H1 (cell line): ENCODE measurements at regions of chr17 and their contacts with region 1.

Region 1: GRCh38 chr17:15444805-15445204 is 22.6 kb downstream of the CDRT4 start:
- DNase-seq: no peak
- H3K4me3 ChIP-seq: no peak overlapping the region
- H3K27ac ChIP-seq: no peak overlapping the region
- H3K4me1 ChIP-seq: no peaks in the 10 kb centered on the region
- H3K27me3 ChIP-seq: no peaks in the 10 kb centered on the region
- CTCF ChIP-seq: no peak
- EP300 ChIP-seq: no peak
- POLR2A ChIP-seq: no peak
- RAD21 ChIP-seq: no peak

Region 2: GRCh38 chr17:15171167-15172047 is 273.4 kb before region 1 on chr17:
- CTCF ChIA-PET with region 1: no interaction called
- POLR2A ChIA-PET with region 1: no interaction called
- DNase-seq: peak; percentile 44 to 83
- H3K4me3 ChIP-seq: no peak overlapping the region
- H3K27ac ChIP-seq: no peak overlapping the region
- H3K4me1 ChIP-seq: 0 out of 7 replicates have a peak, but pooled peaks cover 0 to 3% (median 0%) of the 10 kb centered on the region in 4 experiments
- H3K27me3 ChIP-seq: no peaks in the 10 kb centered on the region
- CTCF ChIP-seq: peak; percentile 81 to 94 (median 87)
- EP300 ChIP-seq: peak in 1 of 2 experiments; percentile 39; a peak in 1 of 3 replicates
- POLR2A ChIP-seq: no peak
- RAD21 ChIP-seq: peak; percentile 88 to 90

Region 3: DNA sequence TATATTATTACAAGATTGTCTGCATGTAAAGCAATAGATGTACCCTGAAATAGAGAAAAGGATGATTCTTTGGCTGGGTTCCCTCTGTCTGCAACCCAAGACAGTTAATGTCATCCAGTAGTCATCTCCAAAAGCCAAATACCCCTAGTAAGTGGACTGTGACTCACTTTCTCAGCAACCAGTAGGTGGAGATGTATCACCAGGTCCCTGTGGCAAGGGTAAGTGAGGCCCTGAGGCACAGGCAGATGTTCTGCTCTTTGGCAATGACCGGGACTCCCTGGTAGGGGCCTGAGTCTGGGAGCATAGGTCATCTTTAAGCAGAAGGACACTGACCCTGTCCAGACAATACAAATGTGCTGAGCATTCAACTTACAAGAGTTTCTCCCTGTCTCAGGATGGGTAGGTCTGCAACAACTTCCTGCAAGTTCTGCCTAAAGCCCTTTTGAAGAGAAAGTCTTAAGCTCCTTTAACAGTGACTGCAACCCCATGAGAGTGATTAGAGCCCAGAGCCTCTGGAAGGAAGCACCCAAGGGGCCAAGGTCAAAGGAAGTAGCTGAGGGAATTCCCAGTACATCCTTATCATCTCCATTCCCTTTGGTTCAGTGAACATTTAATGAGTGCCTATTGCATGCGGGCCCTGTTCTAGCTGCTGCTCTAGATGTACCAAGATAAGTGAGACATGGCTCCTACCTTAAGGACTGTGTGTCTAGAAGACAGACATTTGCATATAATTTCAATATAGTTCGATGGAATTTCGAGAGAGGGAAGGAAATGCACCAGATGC is 211.6 kb before region 1 on chr17:
- CTCF ChIA-PET with region 1: no interaction called
- POLR2A ChIA-PET with region 1: no interaction called
- DNase-seq: no peak
- H3K4me3 ChIP-seq: no peak overlapping the region
- H3K27ac ChIP-seq: no peak overlapping the region
- H3K4me1 ChIP-seq: peaks cover 0 to 3% (median 0%) of the 10 kb centered on the region in 4 experiments; a peak in 1 of 7 replicates
- H3K27me3 ChIP-seq: no peaks in the 10 kb centered on the region; a peak in 1 of 7 replicates
- CTCF ChIP-seq: peak; percentile 53 to 66 (median 53)
- EP300 ChIP-seq: no peak
- POLR2A ChIP-seq: no peak
- RAD21 ChIP-seq: peak; percentile 71 to 82

Region 4: GRCh38 chr17:15273141-15273793 is 171.5 kb before region 1 on chr17:
- CTCF ChIA-PET with region 1: no interaction called
- POLR2A ChIA-PET with region 1: no interaction called
- DNase-seq: no peak
- H3K4me3 ChIP-seq: no peak overlapping the region
- H3K27ac ChIP-seq: no peak overlapping the region
- H3K4me1 ChIP-seq: peaks cover 0 to 3% (median 2%) of the 10 kb centered on the region in 4 experiments; a peak in 4 of 7 replicates
- H3K27me3 ChIP-seq: no peaks in the 10 kb centered on the region; a peak in 1 of 7 replicates
- CTCF ChIP-seq: no peak
- EP300 ChIP-seq: no peak
- POLR2A ChIP-seq: no peak
- RAD21 ChIP-seq: no peak

Region 5: DNA sequence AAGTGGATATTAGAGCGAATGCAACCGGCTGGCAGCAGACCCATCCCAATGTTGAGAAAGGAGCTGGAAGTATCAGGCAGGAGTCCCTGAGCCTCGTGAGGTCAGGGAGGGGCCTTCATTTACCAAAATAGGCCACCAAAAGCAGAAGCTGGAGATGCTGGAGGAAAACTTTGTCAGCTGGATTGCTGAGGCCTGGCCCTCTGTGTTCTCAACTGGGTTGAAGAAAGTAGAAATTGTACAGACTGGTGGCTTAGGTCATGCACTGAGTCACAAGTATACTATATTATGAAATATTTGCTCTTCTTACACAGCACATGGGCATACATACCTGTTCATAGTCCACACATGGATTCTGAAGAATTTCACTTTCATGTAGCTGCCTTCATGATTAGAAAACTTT is 80.2 kb before region 1 on chr17:
- CTCF ChIA-PET with region 1: no interaction called
- POLR2A ChIA-PET with region 1: no interaction called
- DNase-seq: no peak
- H3K4me3 ChIP-seq: no peak overlapping the region
- H3K27ac ChIP-seq: no peak overlapping the region
- H3K4me1 ChIP-seq: no peaks in the 10 kb centered on the region
- H3K27me3 ChIP-seq: no peaks in the 10 kb centered on the region
- CTCF ChIP-seq: no peak
- EP300 ChIP-seq: no peak
- POLR2A ChIP-seq: no peak
- RAD21 ChIP-seq: no peak

Region 6: GRCh38 chr17:15424521-15424920 is 20.3 kb before region 1 on chr17:
- CTCF ChIA-PET with region 1: interaction called, 14 read pairs
- POLR2A ChIA-PET with region 1: no interaction called
- DNase-seq: no peak
- H3K4me3 ChIP-seq: no peak overlapping the region
- H3K27ac ChIP-seq: no peak overlapping the region
- H3K4me1 ChIP-seq: no peaks in the 10 kb centered on the region
- H3K27me3 ChIP-seq: no peaks in the 10 kb centered on the region
- CTCF ChIP-seq: no peak
- EP300 ChIP-seq: no peak
- POLR2A ChIP-seq: no peak
- RAD21 ChIP-seq: no peak

Region 7: GRCh38 chr17:15456972-15457722 is 12.3 kb after region 1 on chr17:
- CTCF ChIA-PET with region 1: interaction called, 26 read pairs
- POLR2A ChIA-PET with region 1: interaction called, 4 read pairs
- DNase-seq: no peak
- H3K4me3 ChIP-seq: no peak overlapping the region
- H3K27ac ChIP-seq: no peak overlapping the region
- H3K4me1 ChIP-seq: no peaks in the 10 kb centered on the region
- H3K27me3 ChIP-seq: no peaks in the 10 kb centered on the region
- CTCF ChIP-seq: no peak
- EP300 ChIP-seq: no peak
- POLR2A ChIP-seq: no peak
- RAD21 ChIP-seq: peak in 1 of 2 experiments; percentile 13; a peak in 1 of 4 replicates